ENCODE measurements at regions of chr9 and their contacts with region 1.

Region 1: DNA sequence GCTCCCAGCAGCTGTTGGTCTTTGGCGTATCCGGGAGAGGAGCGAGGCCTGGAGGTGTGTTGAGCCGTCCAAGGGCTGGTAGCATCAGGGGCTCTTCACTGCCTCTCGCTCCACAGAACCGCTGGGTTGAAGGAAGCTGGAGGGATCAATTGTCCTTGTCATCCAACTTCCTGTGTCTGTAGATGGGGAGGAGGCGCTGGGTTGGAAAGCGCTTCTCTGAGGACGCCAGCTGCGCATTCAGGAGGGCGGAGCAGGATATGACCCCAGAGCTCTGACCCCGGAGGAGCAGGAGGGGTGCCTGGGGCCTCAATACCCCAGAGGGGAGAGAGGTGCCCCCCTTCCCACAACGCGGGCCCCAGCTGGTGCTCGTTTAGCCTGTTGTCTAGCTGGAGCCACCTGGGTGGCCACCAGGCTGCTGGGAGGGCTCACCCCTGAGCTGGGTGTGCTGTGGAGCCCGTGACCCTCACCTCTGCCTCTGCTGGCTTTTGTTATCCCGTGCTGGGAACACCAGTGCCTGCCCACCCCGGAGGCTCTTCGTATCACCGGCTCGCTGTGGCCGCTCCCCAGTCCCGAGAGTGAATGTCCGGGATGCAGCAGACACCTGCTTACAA is 2.0 kb upstream of the DBH start:
- DNase-seq: no peak
- H3K4me3 ChIP-seq: no peak overlapping the region
- H3K27ac ChIP-seq: no peak overlapping the region
- H3K4me1 ChIP-seq: no peaks in the 10 kb centered on the region
- H3K27me3 ChIP-seq: no peaks in the 10 kb centered on the region
- CTCF ChIP-seq: no peak

Region 2: GRCh38 chr9:132732326-132733259 is 901.6 kb before region 1 on chr9:
- CTCF ChIA-PET with region 1: no interaction called
- dilution Hi-C with region 1: no loop called
- in situ Hi-C with region 1: no loop called
- intact Hi-C with region 1: no loop called
- DNase-seq: no peak
- H3K4me3 ChIP-seq: no peak overlapping the region
- H3K27ac ChIP-seq: no peak overlapping the region
- H3K4me1 ChIP-seq: no peaks in the 10 kb centered on the region
- H3K27me3 ChIP-seq: peaks cover 2% of the 10 kb centered on the region
- CTCF ChIP-seq: no peak

Region 3: GRCh38 chr9:133715866-133716563 is 81.8 kb after region 1 on chr9:
- CTCF ChIA-PET with region 1: no interaction called
- dilution Hi-C with region 1: loop called (anchors 5 kb)
- in situ Hi-C with region 1: no loop called
- intact Hi-C with region 1: no loop called
- DNase-seq: no peak
- H3K4me3 ChIP-seq: no peak overlapping the region
- H3K27ac ChIP-seq: no peak overlapping the region
- H3K4me1 ChIP-seq: no peaks in the 10 kb centered on the region
- H3K27me3 ChIP-seq: peaks cover 2% of the 10 kb centered on the region
- CTCF ChIP-seq: no peak